Psoas muscle (tissue), 8 donors: ENCODE measurements at regions of chr3 and their contacts with region 1.

Region 1: DNA sequence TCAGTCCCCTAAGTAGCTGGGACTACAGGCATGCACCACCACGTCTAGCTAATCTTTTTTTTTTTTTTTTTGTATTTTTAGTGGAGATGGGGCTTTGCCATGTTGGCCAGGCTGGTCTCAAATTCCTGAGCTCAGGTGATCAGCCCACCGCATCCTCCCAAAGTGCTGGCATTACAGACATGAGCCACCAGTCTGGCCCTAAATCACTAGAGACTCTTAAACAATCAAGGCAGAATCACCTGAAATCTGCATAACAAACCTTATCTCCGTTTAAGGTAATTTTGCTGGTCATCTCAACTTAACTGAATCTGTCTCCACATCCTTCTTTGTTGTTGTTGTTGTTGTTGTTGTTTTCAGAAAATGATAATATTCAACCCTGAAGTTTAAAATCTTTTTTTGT is 5.6 kb upstream of the TRMT10C start:
- DNase-seq: no peak
- ATAC-seq: no peak
- H3K4me3 ChIP-seq: no peak overlapping the region
- H3K27ac ChIP-seq: no peak overlapping the region
- H3K4me1 ChIP-seq: no peaks in the 10 kb centered on the region
- H3K27me3 ChIP-seq: peaks cover 3 to 24% (median 4%) of the 10 kb centered on the region in 3 donors
- CTCF ChIP-seq: no peak

Region 2: DNA sequence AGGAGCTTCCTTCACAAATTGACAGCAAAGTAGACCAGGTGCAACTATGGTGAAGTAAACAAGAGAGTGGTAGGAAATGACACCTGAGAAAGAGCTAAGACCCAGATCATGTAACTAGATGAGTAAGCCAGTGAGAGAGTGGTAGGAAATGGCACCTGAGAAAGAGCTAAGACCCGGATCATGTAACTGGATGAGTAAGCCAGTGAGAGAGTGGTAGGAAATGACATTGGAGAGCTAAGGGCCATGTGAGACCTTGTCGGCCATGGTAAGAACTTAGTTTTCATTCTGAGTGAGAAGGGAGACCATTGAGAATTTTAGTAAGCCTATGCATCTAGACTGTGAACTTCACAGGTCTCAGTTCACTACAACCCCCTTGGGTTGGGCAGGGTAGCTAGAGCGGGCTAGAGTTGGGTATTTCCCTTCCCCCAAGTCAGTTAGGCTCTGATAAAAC is 37.6 kb before region 1 on chr3:
- intact Hi-C with region 1: loop called (anchors 1 to 5 kb)
- DNase-seq: no peak
- ATAC-seq: peak in 2 of 4 donors; percentile 48 to 82
- H3K4me3 ChIP-seq: no peak overlapping the region
- H3K27ac ChIP-seq: no peak overlapping the region
- H3K4me1 ChIP-seq: no peaks in the 10 kb centered on the region
- H3K27me3 ChIP-seq: peaks cover 0 to 10% (median 0%) of the 10 kb centered on the region in 3 donors
- CTCF ChIP-seq: no peak